ENCODE measurements at regions of chr1 and their contacts with region 1.

Region 1: DNA sequence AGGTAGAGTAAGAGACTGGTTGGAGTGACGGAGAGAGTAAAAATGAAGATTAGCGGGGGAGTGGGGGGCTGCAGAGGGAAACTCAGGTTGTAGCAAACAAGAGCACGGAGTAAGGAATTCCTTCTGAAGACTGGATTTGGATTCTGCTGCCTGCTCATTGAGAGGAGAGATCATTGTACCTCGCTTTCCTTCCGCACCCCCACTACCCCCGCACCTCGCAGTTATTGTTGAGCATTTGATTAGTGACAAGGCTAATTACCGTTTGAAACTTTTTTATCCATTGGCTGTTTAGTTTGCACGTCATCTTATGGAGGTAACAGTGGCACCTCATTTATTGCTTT is 463 bp downstream of the PRPF3 start:
- DNase-seq: peak in 1 of 2 donors; percentile 40
- ATAC-seq: peak in 1 of 3 donors; percentile 12
- H3K4me3 ChIP-seq: peak overlapping the region; percentile 85
- H3K4me3 Mint-ChIP-seq: peak overlapping the region; percentile 100
- H3K27ac ChIP-seq: peak overlapping the region; percentile 89
- H3K27ac Mint-ChIP-seq: peak overlapping the region; percentile 99 to 100
- H3K4me1 ChIP-seq: peaks cover 12% of the 10 kb centered on the region
- H3K4me1 Mint-ChIP-seq: peaks cover 22 to 29% of the 10 kb centered on the region in 2 donors
- H3K27me3 ChIP-seq: no peaks in the 10 kb centered on the region
- H3K27me3 Mint-ChIP-seq: peaks cover 0 to 3% of the 10 kb centered on the region in 2 donors
- CTCF ChIP-seq: no peak

Region 2: GRCh38 chr1:150268705-150269403 is 52.9 kb before region 1 on chr1 and contains the start of gene APH1A:
- intact Hi-C with region 1: loop called (anchors 2 kb)
- DNase-seq: peak; percentile 83 to 95
- ATAC-seq: peak; percentile 94 to 95 (median 94)
- H3K4me3 ChIP-seq: peak within 1 kb of the TSS; percentile 86
- H3K4me3 Mint-ChIP-seq: peak within 1 kb of the TSS; percentile 98
- H3K27ac ChIP-seq: peak within 1 kb of the TSS; percentile 89
- H3K27ac Mint-ChIP-seq: peak within 1 kb of the TSS; percentile 93 to 94
- H3K4me1 ChIP-seq: peaks cover 26% of the 10 kb centered on the region
- H3K4me1 Mint-ChIP-seq: peaks cover 21 to 31% of the 10 kb centered on the region in 2 donors
- H3K27me3 ChIP-seq: no peaks in the 10 kb centered on the region
- H3K27me3 Mint-ChIP-seq: peaks cover 9 to 17% of the 10 kb centered on the region in 2 donors
- CTCF ChIP-seq: no peak
- total RNA-seq, gene APH1A: 133 to 153 (median 143) TPM

Region 3: GRCh38 chr1:150363426-150364230 is 41.8 kb after region 1 on chr1 and contains the start of gene RPRD2:
- intact Hi-C with region 1: loop called (anchors 1 kb)
- DNase-seq: peak; percentile 94 to 100
- ATAC-seq: peak; percentile 91 to 99 (median 95)
- H3K4me3 ChIP-seq: peak within 1 kb of the TSS; percentile 72
- H3K4me3 Mint-ChIP-seq: peak within 1 kb of the TSS; percentile 96
- H3K27ac ChIP-seq: peak within 1 kb of the TSS; percentile 97
- H3K27ac Mint-ChIP-seq: peak within 1 kb of the TSS; percentile 96 to 98
- H3K4me1 ChIP-seq: peaks cover 14% of the 10 kb centered on the region
- H3K4me1 Mint-ChIP-seq: peaks cover 35 to 38% of the 10 kb centered on the region in 2 donors
- H3K27me3 ChIP-seq: no peaks in the 10 kb centered on the region
- H3K27me3 Mint-ChIP-seq: no peaks in the 10 kb centered on the region
- CTCF ChIP-seq: no peak
- total RNA-seq, gene RPRD2: 30.3 to 38.8 (median 34.0) TPM

Region 4: GRCh38 chr1:150429805-150430204 is 108.0 kb after region 1 on chr1:
- intact Hi-C with region 1: no loop called
- DNase-seq: peak in 1 of 2 donors; percentile 43
- ATAC-seq: peak in 2 of 3 donors; percentile 34 to 49
- H3K4me3 ChIP-seq: no peak overlapping the region
- H3K4me3 Mint-ChIP-seq: no peak overlapping the region
- H3K27ac ChIP-seq: no peak overlapping the region
- H3K27ac Mint-ChIP-seq: peak overlapping the region; percentile 4 to 7
- H3K4me1 ChIP-seq: no peaks in the 10 kb centered on the region
- H3K4me1 Mint-ChIP-seq: peaks cover 14 to 22% of the 10 kb centered on the region in 2 donors
- H3K27me3 ChIP-seq: no peaks in the 10 kb centered on the region
- H3K27me3 Mint-ChIP-seq: no peaks in the 10 kb centered on the region
- CTCF ChIP-seq: no peak

Measured in natural killer cell (primary cell).